RWPE1 (cell line): ENCODE measurements at regions of chr10 and their contacts with region 1.

Region 1: GRCh38 chr10:80504158-80504811 is 33.4 kb upstream of the SH2D4B start:
- DNase-seq: no peak
- H3K27ac ChIP-seq: peak overlapping the region; percentile 98
- CTCF ChIP-seq: no peak

Region 2: GRCh38 chr10:80382989-80383388 is 121.3 kb before region 1 on chr10:
- CTCF ChIA-PET with region 1: interaction called, 14 read pairs
- POLR2A ChIA-PET with region 1: no interaction called
- DNase-seq: peak; percentile 71
- H3K27ac ChIP-seq: no peak overlapping the region
- CTCF ChIP-seq: peak; percentile 71

Region 3: DNA sequence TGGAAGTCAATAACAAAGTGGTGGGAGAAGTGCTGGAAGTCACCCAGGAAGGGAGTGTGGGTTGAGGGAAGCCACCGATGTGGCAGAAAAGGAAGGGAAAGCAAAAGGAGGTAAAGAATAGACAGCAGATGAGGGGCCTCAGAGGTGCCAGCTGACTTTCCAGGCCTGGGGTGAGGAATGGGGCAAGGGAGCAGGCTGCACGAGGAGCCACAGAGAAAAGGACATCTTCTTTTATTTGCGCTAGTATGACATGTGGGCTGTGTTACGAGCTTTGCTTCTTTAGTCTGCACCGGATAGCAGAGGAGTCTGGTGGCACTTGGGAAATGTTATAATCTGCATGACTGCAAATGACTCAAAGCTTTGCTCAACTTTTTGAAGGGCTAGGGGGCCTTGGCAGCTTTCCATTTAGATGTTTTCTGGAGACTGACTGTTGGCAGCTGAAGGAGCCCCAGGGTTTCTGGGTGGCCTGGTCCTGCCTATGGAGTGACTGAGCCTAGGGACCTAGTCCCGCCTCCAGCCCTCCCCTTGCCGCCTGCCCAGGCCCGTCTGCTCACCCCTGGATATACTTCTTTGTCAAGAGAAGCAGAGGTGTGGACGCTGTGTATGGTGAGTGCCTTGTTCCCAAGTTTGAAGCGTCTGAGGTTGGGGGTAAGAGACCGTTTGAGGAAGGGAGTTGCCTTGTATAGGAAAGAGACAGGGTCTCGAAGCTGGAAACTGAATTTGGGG is 90.9 kb before region 1 on chr10:
- CTCF ChIA-PET with region 1: interaction called, 10 read pairs
- POLR2A ChIA-PET with region 1: interaction called, 3 read pairs
- DNase-seq: peak; percentile 68
- H3K27ac ChIP-seq: peak overlapping the region; percentile 75
- CTCF ChIP-seq: no peak

Region 4: GRCh38 chr10:80444646-80445319 is 59.5 kb before region 1 on chr10:
- CTCF ChIA-PET with region 1: interaction called, 42 read pairs
- POLR2A ChIA-PET with region 1: no interaction called
- DNase-seq: peak; percentile 62
- H3K27ac ChIP-seq: 0 out of 2 replicates have a peak overlapping the region, but pooled peaks have one; percentile 21
- CTCF ChIP-seq: peak; percentile 83

Region 5: DNA sequence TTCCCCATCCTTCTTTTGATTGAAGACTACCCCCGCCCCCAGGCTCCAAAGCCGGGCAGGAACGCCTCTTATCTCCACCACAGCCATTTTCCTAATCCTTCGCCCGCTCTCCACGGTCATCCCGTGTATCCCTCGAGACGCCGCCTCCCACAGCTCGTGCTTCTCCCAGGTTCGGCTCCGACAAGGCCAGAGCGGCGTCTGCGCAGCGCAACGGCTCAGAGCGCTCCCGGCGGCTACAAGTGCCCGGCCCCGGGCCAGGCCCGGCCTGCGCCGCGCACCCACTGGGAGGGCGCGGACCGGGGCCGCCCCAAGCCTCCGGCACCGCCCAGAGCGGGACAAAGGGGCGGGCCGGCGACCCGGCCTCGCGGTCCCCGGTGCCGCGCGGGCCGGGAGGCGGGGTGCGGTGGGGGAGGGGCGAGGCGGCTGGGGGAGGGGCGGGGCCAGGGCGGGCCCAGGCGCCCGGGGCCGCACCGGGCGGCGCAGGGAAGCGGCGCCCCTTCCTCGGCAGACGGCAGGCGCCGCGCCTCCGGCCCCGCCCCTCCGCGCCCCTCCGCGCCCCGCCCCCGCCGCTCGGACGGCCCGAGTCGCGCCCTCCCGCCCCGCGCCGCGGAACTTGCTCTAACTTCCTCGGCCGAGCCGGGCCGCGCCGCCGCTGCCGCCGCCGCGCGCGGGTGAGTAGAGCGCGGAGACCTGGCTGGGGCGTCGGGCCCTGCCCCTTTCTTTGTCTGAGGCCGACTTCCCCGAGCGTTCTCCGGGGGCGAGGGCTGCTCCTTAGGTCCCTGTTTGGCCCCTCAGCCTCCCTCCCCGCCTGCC is 50.4 kb before region 1 on chr10 and contains the start of gene TSPAN14:
- CTCF ChIA-PET with region 1: interaction called, 41 read pairs
- POLR2A ChIA-PET with region 1: interaction called, 6 read pairs
- DNase-seq: peak; percentile 86
- H3K27ac ChIP-seq: peak within 1 kb of the TSS; percentile 97
- CTCF ChIP-seq: no peak

Region 6: GRCh38 chr10:80459047-80459931 is 45.0 kb before region 1 on chr10:
- CTCF ChIA-PET with region 1: interaction called, 41 read pairs
- POLR2A ChIA-PET with region 1: interaction called, 6 read pairs
- DNase-seq: peak; percentile 79
- H3K27ac ChIP-seq: peak overlapping the region; percentile 97
- CTCF ChIP-seq: no peak; the same call in 1 of the 2 replicates

Region 7: DNA sequence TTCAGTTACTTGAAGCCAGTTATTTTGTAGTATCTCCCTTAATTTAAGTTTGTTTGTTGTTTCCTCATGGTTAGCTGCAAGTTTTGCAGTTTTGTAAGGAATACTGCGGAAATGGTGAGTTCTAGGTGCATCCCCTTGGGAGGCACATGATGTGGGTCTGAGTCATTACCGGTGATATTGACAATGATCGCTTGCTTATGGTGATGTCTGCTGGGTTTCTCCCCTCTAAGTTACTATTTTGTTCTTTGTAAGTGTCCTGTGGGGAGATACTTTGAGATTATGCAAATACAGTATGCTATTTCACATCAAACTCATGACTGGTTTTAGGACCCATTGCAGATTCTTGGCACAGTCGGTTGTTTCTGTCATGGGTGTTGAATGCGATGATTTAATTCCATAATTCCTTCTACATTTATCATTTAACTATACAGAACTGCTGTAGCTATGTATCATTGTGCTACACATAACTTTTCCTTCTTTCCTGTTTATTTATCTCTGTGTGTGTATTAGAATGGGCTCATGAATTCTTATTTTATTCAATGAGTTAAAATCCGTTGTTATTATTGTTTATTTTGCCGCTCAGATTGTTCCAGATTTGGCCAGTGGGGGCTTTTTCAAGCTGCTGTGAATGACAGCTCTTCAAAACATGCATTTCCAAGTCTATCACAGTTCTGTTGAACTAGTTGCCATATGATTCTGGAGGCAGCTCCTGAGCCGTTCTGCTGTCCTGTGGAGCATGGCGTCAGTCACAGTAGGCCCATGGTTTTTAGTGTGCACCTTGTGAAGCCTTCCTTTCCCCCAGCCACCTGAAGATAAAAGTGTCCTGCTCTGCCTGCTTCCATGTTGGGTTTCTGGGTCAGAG is 31.8 kb before region 1 on chr10:
- CTCF ChIA-PET with region 1: interaction called, 25 read pairs
- POLR2A ChIA-PET with region 1: no interaction called
- DNase-seq: peak; percentile 90
- H3K27ac ChIP-seq: peak overlapping the region; percentile 97
- CTCF ChIP-seq: no peak

Region 8: GRCh38 chr10:80878330-80878729 is 374.0 kb after region 1 on chr10:
- CTCF ChIA-PET with region 1: no interaction called
- POLR2A ChIA-PET with region 1: no interaction called
- DNase-seq: no peak
- H3K27ac ChIP-seq: no peak overlapping the region
- CTCF ChIP-seq: no peak